ENCODE measurements at regions of chr13 and their contacts with region 1.

Region 1: GRCh38 chr13:31909864-31910551 is 121.6 kb upstream of the FRY start:
- DNase-seq: no peak
- ATAC-seq: peak; percentile 51

Region 2: DNA sequence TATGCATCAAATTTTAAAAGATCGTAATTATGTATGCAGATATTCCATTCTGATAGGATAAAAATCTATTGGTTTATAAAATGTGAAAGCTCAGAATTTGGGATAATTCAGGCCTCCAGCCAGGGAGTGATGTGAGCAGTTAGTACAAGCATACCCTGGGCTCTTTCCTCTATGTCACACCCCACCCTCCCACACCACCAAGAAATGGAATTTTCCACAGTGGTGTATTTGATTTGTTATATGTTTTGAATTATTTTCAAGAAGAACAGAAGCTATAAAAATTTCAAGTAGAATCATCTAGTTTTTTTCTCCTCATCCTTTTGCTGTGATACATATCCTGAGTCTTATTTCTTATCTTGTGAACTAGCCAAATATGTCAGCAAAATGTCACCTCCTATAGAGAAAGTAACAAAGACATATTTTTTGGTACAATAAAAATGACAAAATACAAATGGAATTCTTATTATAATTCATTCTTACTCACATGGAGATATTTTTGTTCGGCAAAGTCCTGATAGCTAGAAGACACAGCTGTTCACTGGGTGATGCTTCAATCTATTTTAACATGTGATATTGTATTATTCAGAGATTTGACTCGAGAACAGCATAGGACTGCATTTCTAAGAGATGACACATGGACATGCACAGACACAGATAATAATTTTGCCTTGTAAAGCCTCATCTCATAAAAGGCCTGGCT is 60.4 kb after region 1 on chr13:
- intact Hi-C with region 1: loop called (anchors 5 kb)
- DNase-seq: no peak
- ATAC-seq: no peak